ENCODE measurements at regions of chrX and their contacts with region 1.

Region 1: GRCh38 chrX:120560842-120561633 is at the start of gene CUL4B:
- DNase-seq: peak; percentile 78
- ATAC-seq: peak; percentile 87
- H3K4me3 Mint-ChIP-seq: peak within 1 kb of the TSS; percentile 93
- H3K27ac Mint-ChIP-seq: peak within 1 kb of the TSS; percentile 96
- H3K4me1 Mint-ChIP-seq: peaks cover 36% of the 10 kb centered on the region
- H3K27me3 Mint-ChIP-seq: no peaks in the 10 kb centered on the region
- CTCF ChIP-seq: no peak
- total RNA-seq, gene CUL4B: 35.0 and 35.9 TPM in 2 replicates

Region 2: DNA sequence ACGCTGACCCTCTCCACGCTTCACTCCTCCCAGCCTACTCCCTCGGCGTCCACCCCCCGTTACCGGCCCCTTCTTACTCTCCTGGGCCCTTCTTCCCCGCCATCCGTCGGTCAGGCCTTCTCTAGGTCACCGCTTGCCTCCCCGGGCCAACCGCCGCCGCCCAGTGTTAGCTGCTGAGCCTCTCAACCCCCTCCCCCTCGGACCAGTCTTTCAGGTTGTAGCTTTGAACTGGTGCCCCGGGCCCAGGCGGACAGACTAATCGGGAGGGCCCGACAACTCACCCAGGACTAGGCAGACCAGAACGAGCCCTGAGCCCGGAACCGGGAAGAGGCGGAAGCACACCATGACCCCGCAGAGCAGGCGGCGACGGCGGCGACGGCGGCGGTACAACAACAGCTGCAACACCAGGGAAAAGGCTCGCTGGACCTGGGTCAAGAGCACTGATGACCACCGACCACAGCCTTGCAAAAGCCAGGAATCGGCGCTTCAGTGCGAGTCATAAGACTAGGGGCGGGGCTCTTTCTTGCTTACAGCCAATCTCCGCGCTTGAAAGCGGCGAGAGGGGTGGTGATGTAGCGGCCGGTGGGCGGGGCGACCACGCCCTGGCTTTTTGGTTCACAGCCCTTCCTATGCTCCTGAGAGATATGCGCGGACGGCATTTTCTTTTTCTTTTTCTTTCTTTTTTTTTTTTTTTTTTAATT is 92.1 kb before region 1 on chrX and contains the start of gene LAMP2:
- CTCF ChIA-PET with region 1: no interaction called
- POLR2A ChIA-PET with region 1: no interaction called
- intact Hi-C with region 1: no loop called
- DNase-seq: peak; percentile 74
- ATAC-seq: peak; percentile 97
- H3K4me3 Mint-ChIP-seq: peak within 1 kb of the TSS; percentile 94
- H3K27ac Mint-ChIP-seq: peak within 1 kb of the TSS; percentile 86
- H3K4me1 Mint-ChIP-seq: peaks cover 31% of the 10 kb centered on the region
- H3K27me3 Mint-ChIP-seq: no peaks in the 10 kb centered on the region
- CTCF ChIP-seq: no peak
- total RNA-seq, gene LAMP2: 29.7 and 32.6 TPM in 2 replicates

Region 3: GRCh38 chrX:120485638-120486520 is 75.2 kb before region 1 on chrX:
- CTCF ChIA-PET with region 1: interaction called, 5 read pairs
- POLR2A ChIA-PET with region 1: interaction called, 16 read pairs
- intact Hi-C with region 1: loop called (anchors 2 kb)
- DNase-seq: peak; percentile 38
- ATAC-seq: peak; percentile 83
- H3K4me3 Mint-ChIP-seq: peak overlapping the region; percentile 87
- H3K27ac Mint-ChIP-seq: peak overlapping the region; percentile 91
- H3K4me1 Mint-ChIP-seq: peaks cover 14% of the 10 kb centered on the region
- H3K27me3 Mint-ChIP-seq: no peaks in the 10 kb centered on the region
- CTCF ChIP-seq: no peak

Region 4: GRCh38 chrX:120549483-120550452 is 11.3 kb before region 1 on chrX:
- CTCF ChIA-PET with region 1: no interaction called
- POLR2A ChIA-PET with region 1: interaction called, 10 read pairs
- intact Hi-C with region 1: no loop called
- DNase-seq: no peak
- ATAC-seq: no peak
- H3K4me3 Mint-ChIP-seq: no peak overlapping the region
- H3K27ac Mint-ChIP-seq: no peak overlapping the region
- H3K4me1 Mint-ChIP-seq: peaks cover under 1% of the 10 kb centered on the region
- H3K27me3 Mint-ChIP-seq: no peaks in the 10 kb centered on the region
- CTCF ChIP-seq: no peak

Region 5: GRCh38 chrX:120603707-120604360 is 42.8 kb after region 1 on chrX and contains the start of gene MCTS1:
- CTCF ChIA-PET with region 1: no interaction called
- POLR2A ChIA-PET with region 1: interaction called, 139 read pairs
- intact Hi-C with region 1: loop called (anchors 1 kb)
- DNase-seq: peak; percentile 52
- ATAC-seq: peak; percentile 91
- H3K4me3 Mint-ChIP-seq: peak within 1 kb of the TSS; percentile 93
- H3K27ac Mint-ChIP-seq: peak within 1 kb of the TSS; percentile 94
- H3K4me1 Mint-ChIP-seq: peaks cover 8% of the 10 kb centered on the region
- H3K27me3 Mint-ChIP-seq: no peaks in the 10 kb centered on the region
- CTCF ChIP-seq: no peak
- total RNA-seq, gene MCTS1: 45.1 and 49.8 TPM in 2 replicates

Region 6: DNA sequence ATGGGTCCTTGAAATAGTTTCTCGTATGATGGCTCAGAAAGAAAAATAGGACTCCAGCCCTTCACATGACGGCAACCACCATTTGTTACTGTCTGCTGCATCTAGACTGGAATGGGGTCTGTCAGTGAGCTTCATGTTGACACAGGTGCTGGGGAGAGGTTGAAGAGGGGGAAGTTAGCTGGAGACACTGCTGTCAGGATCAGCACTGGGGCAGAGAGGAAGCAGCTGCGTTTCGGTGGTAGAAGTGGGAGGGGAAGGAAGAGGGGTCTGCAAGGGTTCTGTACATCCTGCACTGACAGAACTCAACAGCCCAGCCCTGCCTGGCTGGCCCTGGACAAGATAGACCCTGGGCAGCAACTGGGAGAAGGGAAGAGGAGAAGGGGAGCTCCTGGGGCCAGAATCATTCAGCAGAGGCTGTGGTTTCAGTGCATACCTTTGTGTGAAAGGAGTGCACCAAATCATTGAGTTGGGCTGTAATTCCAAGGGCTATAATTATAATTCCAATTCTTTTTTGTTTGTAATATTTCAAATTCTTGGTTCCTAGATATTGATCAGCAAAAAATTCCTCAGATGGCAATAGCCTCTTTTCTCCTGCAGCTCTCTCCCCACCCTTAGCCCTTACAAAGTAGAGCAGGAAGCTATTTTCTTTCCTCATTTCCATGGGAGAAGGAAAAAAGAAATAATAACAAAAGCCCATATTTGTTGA is 188.3 kb after region 1 on chrX:
- CTCF ChIA-PET with region 1: no interaction called
- POLR2A ChIA-PET with region 1: interaction called, 15 read pairs
- intact Hi-C with region 1: loop called (anchors 2 kb)
- DNase-seq: peak; percentile 18
- ATAC-seq: peak; percentile 80
- H3K4me3 Mint-ChIP-seq: peak overlapping the region; percentile 66
- H3K27ac Mint-ChIP-seq: peak overlapping the region; percentile 86
- H3K4me1 Mint-ChIP-seq: peaks cover 76% of the 10 kb centered on the region
- H3K27me3 Mint-ChIP-seq: no peaks in the 10 kb centered on the region
- CTCF ChIP-seq: no peak

Region 7: GRCh38 chrX:120755066-120755846 is 194.2 kb after region 1 on chrX:
- CTCF ChIA-PET with region 1: no interaction called
- POLR2A ChIA-PET with region 1: interaction called, 11 read pairs
- intact Hi-C with region 1: loop called (anchors 2 kb)
- DNase-seq: peak; percentile 23
- ATAC-seq: peak; percentile 79
- H3K4me3 Mint-ChIP-seq: peak overlapping the region; percentile 3
- H3K27ac Mint-ChIP-seq: peak overlapping the region; percentile 90
- H3K4me1 Mint-ChIP-seq: peaks cover 88% of the 10 kb centered on the region
- H3K27me3 Mint-ChIP-seq: no peaks in the 10 kb centered on the region
- CTCF ChIP-seq: no peak

Region 8: DNA sequence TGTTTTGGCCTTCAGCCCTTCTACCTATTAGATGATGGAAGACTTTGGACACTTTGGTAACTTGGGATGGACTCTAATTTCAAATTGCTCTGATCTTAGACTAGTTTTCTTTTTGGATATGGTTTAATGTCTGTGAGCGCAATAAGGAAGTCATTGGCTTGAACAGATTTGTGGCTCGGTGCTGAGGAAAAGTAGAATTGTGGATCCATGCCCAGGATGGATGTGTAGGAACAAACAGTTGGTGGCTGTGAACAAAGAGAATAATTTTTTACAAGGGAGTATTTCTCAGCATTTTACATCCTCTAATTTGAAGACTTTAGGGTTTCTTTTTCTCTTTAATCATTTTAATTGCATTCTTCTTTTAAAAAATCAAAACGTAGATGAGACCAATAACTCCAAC is 813.4 kb after region 1 on chrX:
- CTCF ChIA-PET with region 1: no interaction called
- POLR2A ChIA-PET with region 1: no interaction called
- intact Hi-C with region 1: no loop called
- DNase-seq: no peak
- ATAC-seq: no peak
- H3K4me3 Mint-ChIP-seq: no peak overlapping the region
- H3K27ac Mint-ChIP-seq: no peak overlapping the region
- H3K4me1 Mint-ChIP-seq: no peaks in the 10 kb centered on the region
- H3K27me3 Mint-ChIP-seq: no peaks in the 10 kb centered on the region
- CTCF ChIP-seq: no peak

Measured in activated B cell treated with CpG ODN at 0.5 μM for 24 hours (primary cell).